ENCODE measurements at regions of chr19 and their contacts with region 1.

Region 1: GRCh38 chr19:58558623-58559274 is 338 bp upstream of the UBE2M start:
- DNase-seq: peak; percentile 99
- H3K4me3 ChIP-seq: peak overlapping the region; percentile 73
- H3K27ac ChIP-seq: peak overlapping the region; percentile 98
- H3K4me1 ChIP-seq: peaks cover 26% of the 10 kb centered on the region
- H3K27me3 ChIP-seq: no peaks in the 10 kb centered on the region
- CTCF ChIP-seq: no peak

Region 2: DNA sequence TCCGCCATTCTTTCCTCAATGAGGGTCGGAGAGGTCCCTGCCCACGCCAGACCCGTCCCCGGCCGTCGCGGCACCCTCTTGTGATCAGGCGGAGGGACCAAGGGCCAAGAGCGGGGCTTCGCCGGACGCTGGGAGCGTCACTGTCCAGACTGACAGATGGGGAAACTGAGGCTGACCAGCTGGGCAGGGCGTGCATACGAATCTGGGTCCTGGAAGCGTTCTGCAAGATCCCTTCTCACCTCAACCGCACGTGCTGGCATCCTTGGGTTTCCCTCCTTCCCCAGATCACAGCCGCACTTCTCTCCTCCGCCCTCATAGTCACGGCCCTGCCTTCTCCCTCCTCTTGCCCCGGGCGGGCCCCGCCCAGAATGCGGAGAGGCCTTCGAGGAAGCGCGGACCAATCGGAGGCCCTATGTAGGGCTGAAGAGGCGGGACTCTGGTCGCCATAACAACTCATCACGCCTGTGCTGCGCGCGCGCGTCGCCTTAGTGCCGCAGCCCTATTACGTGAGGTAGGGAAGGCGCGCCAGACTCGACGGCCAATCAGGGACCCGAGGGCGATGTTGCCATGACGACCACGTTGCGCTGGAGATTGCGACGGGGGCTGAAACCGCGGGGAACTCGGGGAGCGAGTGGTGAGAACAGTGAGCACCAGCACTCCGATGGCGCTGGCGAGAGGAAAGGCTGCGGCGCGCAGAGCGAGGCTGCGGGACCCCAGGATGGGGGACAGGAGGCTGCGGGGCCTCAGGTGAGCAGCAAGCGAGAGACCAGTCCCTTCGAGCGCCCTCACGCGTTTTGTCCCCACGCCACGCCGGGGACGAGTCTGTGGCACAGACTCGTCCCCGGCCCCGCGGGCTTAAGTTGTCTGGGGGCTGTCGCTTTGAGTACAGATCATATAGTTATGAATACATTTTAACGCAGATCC is 157.6 kb before region 1 on chr19:
- CTCF ChIA-PET with region 1: no interaction called
- POLR2A ChIA-PET with region 1: no interaction called
- intact Hi-C with region 1: loop called (anchors 1 kb)
- DNase-seq: peak; percentile 100
- H3K4me3 ChIP-seq: peak overlapping the region; percentile 72
- H3K27ac ChIP-seq: peak overlapping the region; percentile 88
- H3K4me1 ChIP-seq: peaks cover 14% of the 10 kb centered on the region
- H3K27me3 ChIP-seq: no peaks in the 10 kb centered on the region
- CTCF ChIP-seq: no peak

Region 3: DNA sequence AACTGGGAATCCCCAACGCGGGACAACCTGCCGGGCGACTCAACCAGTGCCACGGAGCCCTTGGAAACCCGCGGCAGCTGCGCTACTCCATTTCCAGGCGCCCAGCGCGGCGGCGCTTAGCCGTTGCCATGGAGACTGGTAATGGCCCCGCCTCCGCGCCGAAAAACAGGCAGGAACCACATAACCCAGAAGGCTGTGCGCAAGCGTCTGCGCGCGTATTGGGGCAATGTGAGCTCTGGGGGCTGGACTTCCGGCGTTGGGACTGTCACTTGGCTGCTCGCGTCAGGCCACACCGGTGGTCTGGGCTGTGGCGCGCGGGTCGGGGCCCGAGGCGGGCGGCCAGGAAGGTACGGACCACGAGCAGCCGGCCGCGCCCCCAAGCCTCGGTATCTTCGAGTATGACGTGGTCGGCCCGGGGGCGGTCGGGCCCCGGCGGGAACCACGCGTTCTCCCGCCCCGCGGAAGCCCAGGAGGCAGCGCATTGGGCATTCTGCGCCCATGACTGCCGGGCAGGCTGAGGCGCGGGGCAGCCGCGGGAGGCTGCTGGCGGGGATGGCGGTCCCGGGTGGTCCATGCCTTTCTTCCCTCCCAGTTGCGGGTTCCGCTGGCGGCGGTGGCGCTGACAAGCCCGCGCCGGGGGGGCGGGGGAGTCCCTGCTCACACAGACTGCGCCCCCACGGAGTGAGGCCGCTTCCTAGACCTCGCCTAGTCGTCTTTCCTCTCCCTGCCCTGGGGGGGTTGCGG is 107.2 kb before region 1 on chr19 and contains the start of gene ZNF324B:
- CTCF ChIA-PET with region 1: no interaction called
- POLR2A ChIA-PET with region 1: no interaction called
- intact Hi-C with region 1: no loop called
- DNase-seq: peak; percentile 99
- H3K4me3 ChIP-seq: peak within 1 kb of the TSS; percentile 81
- H3K27ac ChIP-seq: peak within 1 kb of the TSS; percentile 39
- H3K4me1 ChIP-seq: no peaks in the 10 kb centered on the region
- H3K27me3 ChIP-seq: no peaks in the 10 kb centered on the region
- CTCF ChIP-seq: no peak
- total RNA-seq, gene ZNF324B: 6.8 and 7.9 TPM in 2 replicates

Region 4: GRCh38 chr19:58479736-58480480 is 78.8 kb before region 1 on chr19:
- CTCF ChIA-PET with region 1: no interaction called
- POLR2A ChIA-PET with region 1: interaction called, 17 read pairs
- intact Hi-C with region 1: no loop called
- DNase-seq: no peak
- H3K4me3 ChIP-seq: no peak overlapping the region
- H3K27ac ChIP-seq: no peak overlapping the region
- H3K4me1 ChIP-seq: peaks cover 6% of the 10 kb centered on the region
- H3K27me3 ChIP-seq: no peaks in the 10 kb centered on the region
- CTCF ChIP-seq: no peak

Measured in A673 (cell line).